Thyroid gland (tissue), 4 donors: ENCODE measurements at regions of chr9 and their contacts with region 1.

Region 1: DNA sequence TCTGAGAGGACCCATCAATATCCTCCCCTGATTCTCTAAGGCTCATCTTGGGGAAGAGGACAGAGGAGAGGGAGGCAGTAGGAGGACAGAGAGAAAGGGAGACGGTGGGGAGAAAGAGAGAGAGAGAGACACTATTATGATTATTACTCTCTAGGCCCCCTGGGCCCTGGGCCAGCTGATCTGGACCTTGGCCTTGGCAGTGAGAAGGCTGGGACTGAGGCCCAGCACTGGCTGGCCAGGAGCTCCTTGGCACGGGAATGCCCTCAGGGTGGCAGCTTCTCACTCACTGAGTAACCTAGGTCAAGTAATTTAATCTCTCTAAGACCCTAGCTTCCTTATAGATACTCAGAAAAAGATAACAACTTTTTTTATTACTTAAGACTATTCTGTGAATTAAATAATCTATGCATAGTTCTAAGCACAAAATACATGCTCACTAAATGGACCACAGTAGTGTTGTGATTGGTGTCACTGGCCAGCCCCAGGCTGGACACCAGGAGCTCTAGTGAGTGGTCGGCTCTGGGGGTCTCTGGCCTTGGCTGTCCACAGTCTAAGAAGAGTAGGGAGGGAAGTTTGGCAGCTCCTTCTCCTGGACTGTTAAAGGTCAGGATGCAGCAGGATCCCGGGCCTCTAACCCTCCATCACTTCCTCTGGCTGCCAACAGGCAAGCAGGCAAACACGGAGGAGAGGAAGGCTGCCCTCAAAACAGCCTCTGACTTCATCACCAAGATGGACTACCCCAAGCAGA is 50.0 kb downstream of the GSN start:
- DNase-seq: peak; percentile 33 to 64
- H3K4me3 ChIP-seq: no peak overlapping the region
- H3K27ac ChIP-seq: peak overlapping the region; percentile 50 to 91 (median 80)
- H3K4me1 ChIP-seq: peaks cover 29 to 53% of the 10 kb centered on the region in 2 donors
- H3K27me3 ChIP-seq: no peaks in the 10 kb centered on the region
- CTCF ChIP-seq: no peak
- POLR2A ChIP-seq: no peak

Region 2: GRCh38 chr9:121121582-121122087 is 196.3 kb before region 1 on chr9:
- intact Hi-C with region 1: no loop called
- DNase-seq: peak; percentile 99
- H3K4me3 ChIP-seq: peak overlapping the region in 2 of 3 donors; percentile 27 to 50
- H3K27ac ChIP-seq: peak overlapping the region in 2 of 3 donors; percentile 4 to 41
- H3K4me1 ChIP-seq: peaks cover 5 to 9% of the 10 kb centered on the region in 2 donors
- H3K27me3 ChIP-seq: no peaks in the 10 kb centered on the region
- CTCF ChIP-seq: peak in 4 of 6 experiments; percentile 41 to 54 (median 46)
- POLR2A ChIP-seq: peak in 1 of 2 donors; percentile 77

Region 3: DNA sequence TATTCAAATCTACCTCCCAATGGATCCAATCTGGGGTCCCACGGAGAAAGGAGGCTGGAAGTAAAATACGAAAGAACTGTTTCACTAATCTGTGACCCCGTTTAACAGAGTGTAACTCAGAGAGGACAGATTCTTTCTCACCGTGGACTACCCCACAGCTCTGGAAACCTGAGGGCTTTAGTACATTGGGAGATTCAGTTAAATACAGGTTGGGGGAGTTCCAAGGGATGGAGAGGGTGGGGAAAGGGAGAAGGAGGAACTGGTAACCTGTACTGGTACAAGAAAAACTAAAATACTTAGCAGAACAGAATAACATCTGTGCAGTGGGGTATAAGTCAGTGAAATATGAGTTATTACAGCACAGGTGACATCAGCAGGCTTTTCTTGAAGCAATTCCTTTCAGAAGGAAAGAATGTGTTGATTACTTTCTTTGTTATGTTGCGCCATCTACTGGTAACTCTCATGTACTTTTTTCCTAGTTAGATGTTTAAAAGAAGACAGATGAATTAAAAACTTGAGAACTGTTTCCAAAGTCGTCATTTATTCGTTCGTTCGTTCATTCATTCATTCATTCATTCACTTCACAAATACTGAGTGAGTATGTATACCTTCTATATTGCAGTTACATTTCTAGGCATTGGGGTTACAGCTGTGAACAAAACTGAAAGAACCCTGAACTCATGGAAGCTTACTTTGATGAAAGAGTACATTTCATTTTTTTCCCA is 82.1 kb after region 1 on chr9:
- intact Hi-C with region 1: loop called (anchors 5 kb)
- DNase-seq: no peak
- H3K4me3 ChIP-seq: no peak overlapping the region
- H3K27ac ChIP-seq: no peak overlapping the region
- H3K4me1 ChIP-seq: no peaks in the 10 kb centered on the region
- H3K27me3 ChIP-seq: no peaks in the 10 kb centered on the region
- CTCF ChIP-seq: peak; percentile 43 to 89 (median 56)
- POLR2A ChIP-seq: no peak

Region 4: DNA sequence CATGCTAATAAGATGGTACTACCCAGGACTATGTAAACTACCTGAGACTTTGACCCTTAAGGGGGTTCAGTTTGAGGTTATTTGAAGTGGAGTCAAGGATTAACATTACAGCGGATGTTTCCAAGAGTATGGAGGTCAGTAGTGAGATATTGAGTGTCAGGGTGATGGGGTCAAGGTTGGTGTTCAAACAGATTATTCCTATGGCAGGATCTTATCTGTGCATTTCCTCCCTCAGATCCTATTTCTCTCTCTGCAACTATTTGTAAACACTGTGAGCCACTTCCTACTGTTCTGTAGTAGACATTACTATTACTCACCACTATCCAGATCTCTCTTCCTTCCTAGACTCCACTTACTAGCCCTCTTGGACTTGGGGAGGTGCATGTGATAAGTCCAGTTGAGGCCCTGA is 106.1 kb after region 1 on chr9:
- intact Hi-C with region 1: no loop called
- DNase-seq: no peak
- H3K4me3 ChIP-seq: no peak overlapping the region
- H3K27ac ChIP-seq: no peak overlapping the region
- H3K4me1 ChIP-seq: no peaks in the 10 kb centered on the region
- H3K27me3 ChIP-seq: no peaks in the 10 kb centered on the region
- CTCF ChIP-seq: no peak
- POLR2A ChIP-seq: no peak